SK-N-SH (cell line): ENCODE measurements at regions of chr5 and their contacts with region 1.

Region 1: DNA sequence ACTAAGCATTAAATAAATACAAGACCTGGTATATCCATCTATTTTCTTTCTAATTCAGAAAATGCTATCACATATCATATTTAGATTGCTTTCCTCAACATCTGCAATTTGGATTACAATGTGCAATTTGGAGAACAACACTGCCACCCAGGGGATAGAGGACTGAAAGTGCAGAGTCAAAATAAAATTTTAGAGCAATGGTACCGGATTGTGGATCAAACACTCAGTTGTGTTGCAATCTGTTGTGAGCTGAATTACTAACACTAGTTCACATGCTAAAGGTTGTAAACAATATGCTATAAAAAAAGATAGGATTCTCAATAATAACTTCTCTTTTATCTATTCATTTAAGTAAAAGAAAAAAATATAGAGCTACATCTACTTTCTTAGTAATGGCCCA is 11.9 kb upstream of the SRFBP1 start:
- DNase-seq: peak; percentile 66
- H3K4me3 ChIP-seq: no peak overlapping the region; a peak in 1 of 4 replicates
- H3K27ac ChIP-seq: no peak overlapping the region; a peak in 1 of 4 replicates
- H3K4me1 ChIP-seq: no peaks in the 10 kb centered on the region; a peak in 1 of 4 replicates
- H3K27me3 ChIP-seq: no peaks in the 10 kb centered on the region
- CTCF ChIP-seq: peak; percentile 83
- EP300 ChIP-seq: no peak; a peak in 1 of 4 replicates
- RAD21 ChIP-seq: peak; percentile 97

Region 2: GRCh38 chr5:121630402-121630801 is 319.5 kb before region 1 on chr5:
- CTCF ChIA-PET with region 1: interaction called, 11 read pairs
- POLR2A ChIA-PET with region 1: no interaction called
- DNase-seq: no peak
- H3K4me3 ChIP-seq: no peak overlapping the region
- H3K27ac ChIP-seq: peak overlapping the region in 1 of 2 experiments; percentile 87; a peak in 2 of 4 replicates
- H3K4me1 ChIP-seq: peaks cover 0 to 16% of the 10 kb centered on the region in 2 experiments; a peak in 2 of 4 replicates
- H3K27me3 ChIP-seq: no peaks in the 10 kb centered on the region
- CTCF ChIP-seq: peak; percentile 33
- EP300 ChIP-seq: no peak
- RAD21 ChIP-seq: peak; percentile 59

Region 3: DNA sequence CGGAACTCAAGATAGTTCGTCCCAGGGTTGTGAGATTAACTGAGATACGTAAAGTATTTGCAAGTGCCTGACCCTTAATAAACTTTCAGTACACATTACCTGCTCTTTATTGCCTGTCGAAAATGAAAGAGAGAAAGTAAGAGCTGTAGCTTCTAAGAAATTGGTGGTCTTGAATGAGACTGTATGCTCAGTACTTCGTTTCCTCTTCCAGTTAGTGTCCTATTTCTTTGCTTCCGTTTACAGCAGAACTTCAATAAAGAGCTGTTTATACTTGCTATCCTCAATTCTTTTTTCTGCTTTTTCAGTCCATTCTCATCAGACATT is 12.4 kb after region 1 on chr5:
- CTCF ChIA-PET with region 1: interaction called, 52 read pairs
- POLR2A ChIA-PET with region 1: interaction called, 4 read pairs
- DNase-seq: no peak
- H3K4me3 ChIP-seq: peak overlapping the region; percentile 97 to 98
- H3K27ac ChIP-seq: peak overlapping the region; percentile 47 to 91
- H3K4me1 ChIP-seq: peaks cover 0 to 7% of the 10 kb centered on the region in 2 experiments; a peak in 3 of 4 replicates
- H3K27me3 ChIP-seq: no peaks in the 10 kb centered on the region
- CTCF ChIP-seq: no peak
- EP300 ChIP-seq: no peak
- RAD21 ChIP-seq: no peak